Esophagus muscularis mucosa (tissue), 4 donors: ENCODE measurements at regions of chr10 and their contacts with region 1.

Region 1: GRCh38 chr10:69789133-69789576 is 12.6 kb upstream of the COL13A1 start:
- DNase-seq: no peak
- H3K4me3 ChIP-seq: no peak overlapping the region
- H3K27ac ChIP-seq: peak overlapping the region; percentile 9 to 53 (median 46)
- H3K4me1 ChIP-seq: peaks cover 0 to 29% (median 13%) of the 10 kb centered on the region in 4 donors
- H3K27me3 ChIP-seq: no peaks in the 10 kb centered on the region
- CTCF ChIP-seq: peak; percentile 56 to 66 (median 57)
- EP300 ChIP-seq: no peak
- POLR2A ChIP-seq: no peak

Region 2: GRCh38 chr10:69668721-69669120 is 120.4 kb before region 1 on chr10:
- intact Hi-C with region 1: no loop called
- DNase-seq: no peak
- H3K4me3 ChIP-seq: no peak overlapping the region
- H3K27ac ChIP-seq: no peak overlapping the region
- H3K4me1 ChIP-seq: no peaks in the 10 kb centered on the region
- H3K27me3 ChIP-seq: peaks cover 0 to 39% (median 0%) of the 10 kb centered on the region in 4 donors
- CTCF ChIP-seq: no peak
- EP300 ChIP-seq: no peak
- POLR2A ChIP-seq: no peak

Region 3: GRCh38 chr10:69835875-69836730 is 46.9 kb after region 1 on chr10:
- intact Hi-C with region 1: no loop called
- DNase-seq: no peak
- H3K4me3 ChIP-seq: no peak overlapping the region
- H3K27ac ChIP-seq: no peak overlapping the region
- H3K4me1 ChIP-seq: peaks cover 0 to 28% (median 6%) of the 10 kb centered on the region in 4 donors
- H3K27me3 ChIP-seq: no peaks in the 10 kb centered on the region
- CTCF ChIP-seq: no peak
- EP300 ChIP-seq: no peak
- POLR2A ChIP-seq: no peak

Region 4: GRCh38 chr10:69914398-69915214 is 125.5 kb after region 1 on chr10:
- intact Hi-C with region 1: loop called (anchors 2 kb)
- DNase-seq: no peak
- H3K4me3 ChIP-seq: no peak overlapping the region
- H3K27ac ChIP-seq: no peak overlapping the region
- H3K4me1 ChIP-seq: peaks cover 12 to 45% (median 38%) of the 10 kb centered on the region in 4 donors
- H3K27me3 ChIP-seq: no peaks in the 10 kb centered on the region
- CTCF ChIP-seq: peak in 2 of 3 experiments; percentile 90 to 96
- EP300 ChIP-seq: no peak
- POLR2A ChIP-seq: no peak